PC-3 (cell line): ENCODE measurements at regions of chr3 and their contacts with region 1.

Region 1: GRCh38 chr3:67461667-67462142 is 192.7 kb downstream of the SUCLG2 start:
- DNase-seq: peak; percentile 12
- ATAC-seq: peak; percentile 47
- H3K4me3 ChIP-seq: no peak overlapping the region
- H3K27ac ChIP-seq: peak overlapping the region; percentile 59
- H3K4me1 ChIP-seq: peaks cover 7% of the 10 kb centered on the region; the same call in 1 of the 2 replicates
- H3K27me3 ChIP-seq: no peaks in the 10 kb centered on the region
- CTCF ChIP-seq: no peak

Region 2: GRCh38 chr3:67605377-67605776 is 143.7 kb after region 1 on chr3:
- CTCF ChIA-PET with region 1: no interaction called
- POLR2A ChIA-PET with region 1: no interaction called
- intact Hi-C with region 1: loop called (anchors 10 kb)
- DNase-seq: peak; percentile 69
- ATAC-seq: peak; percentile 72
- H3K4me3 ChIP-seq: no peak overlapping the region
- H3K27ac ChIP-seq: peak overlapping the region; percentile 39; the same call in 1 of the 2 replicates
- H3K4me1 ChIP-seq: peaks cover 40% of the 10 kb centered on the region
- H3K27me3 ChIP-seq: no peaks in the 10 kb centered on the region
- CTCF ChIP-seq: peak; percentile 42